ENCODE measurements at regions of chr15 and their contacts with region 1.

Region 1: GRCh38 chr15:56918046-56918938 is at the start of gene TCF12:
- DNase-seq: peak; percentile 91
- ATAC-seq: peak; percentile 88
- H3K4me3 Mint-ChIP-seq: peak within 1 kb of the TSS; percentile 99
- H3K27ac Mint-ChIP-seq: peak within 1 kb of the TSS; percentile 83
- H3K4me1 Mint-ChIP-seq: peaks cover 34% of the 10 kb centered on the region
- H3K27me3 Mint-ChIP-seq: no peaks in the 10 kb centered on the region
- CTCF ChIP-seq: no peak
- total RNA-seq, gene TCF12: 60.5 to 67.4 TPM

Region 2: GRCh38 chr15:56832125-56832524 is 86.2 kb before region 1 on chr15:
- CTCF ChIA-PET with region 1: no interaction called
- POLR2A ChIA-PET with region 1: no interaction called
- intact Hi-C with region 1: no loop called
- DNase-seq: no peak
- ATAC-seq: no peak
- H3K4me3 Mint-ChIP-seq: no peak overlapping the region
- H3K27ac Mint-ChIP-seq: no peak overlapping the region
- H3K4me1 Mint-ChIP-seq: no peaks in the 10 kb centered on the region
- H3K27me3 Mint-ChIP-seq: no peaks in the 10 kb centered on the region
- CTCF ChIP-seq: no peak

Region 3: GRCh38 chr15:56886932-56887781 is 31.1 kb before region 1 on chr15:
- CTCF ChIA-PET with region 1: interaction called, 3 read pairs
- POLR2A ChIA-PET with region 1: interaction called, 19 read pairs
- intact Hi-C with region 1: loop called (anchors 5 kb)
- DNase-seq: peak; percentile 80
- ATAC-seq: peak; percentile 91
- H3K4me3 Mint-ChIP-seq: peak overlapping the region; percentile 77
- H3K27ac Mint-ChIP-seq: peak overlapping the region; percentile 83
- H3K4me1 Mint-ChIP-seq: peaks cover 25% of the 10 kb centered on the region
- H3K27me3 Mint-ChIP-seq: no peaks in the 10 kb centered on the region
- CTCF ChIP-seq: no peak

Region 4: DNA sequence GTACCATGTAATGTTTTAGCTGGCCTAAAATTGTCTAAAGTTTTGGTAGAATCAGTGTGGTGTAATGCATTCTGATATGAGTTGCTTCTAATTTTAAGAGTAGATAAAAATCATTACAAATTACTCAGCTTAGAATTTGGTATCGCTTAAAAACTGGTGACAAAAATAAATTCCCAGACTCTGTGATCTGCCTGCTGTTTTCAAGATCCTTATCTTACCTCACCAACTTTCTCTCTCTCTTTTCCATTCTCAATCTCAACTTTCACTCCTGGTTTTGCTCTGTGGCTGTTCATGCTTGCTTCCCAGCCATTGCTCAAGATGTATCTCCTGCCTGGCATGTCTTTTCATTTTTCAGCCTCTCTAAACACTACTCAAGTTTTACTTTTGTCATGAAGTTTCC is 45.9 kb after region 1 on chr15:
- CTCF ChIA-PET with region 1: interaction called, 3 read pairs
- POLR2A ChIA-PET with region 1: no interaction called
- intact Hi-C with region 1: loop called (anchors 10 kb)
- DNase-seq: no peak
- ATAC-seq: peak; percentile 39
- H3K4me3 Mint-ChIP-seq: no peak overlapping the region
- H3K27ac Mint-ChIP-seq: no peak overlapping the region
- H3K4me1 Mint-ChIP-seq: peaks cover 58% of the 10 kb centered on the region
- H3K27me3 Mint-ChIP-seq: no peaks in the 10 kb centered on the region
- CTCF ChIP-seq: no peak